ENCODE measurements at regions of chr14 and their contacts with region 1.

Region 1: DNA sequence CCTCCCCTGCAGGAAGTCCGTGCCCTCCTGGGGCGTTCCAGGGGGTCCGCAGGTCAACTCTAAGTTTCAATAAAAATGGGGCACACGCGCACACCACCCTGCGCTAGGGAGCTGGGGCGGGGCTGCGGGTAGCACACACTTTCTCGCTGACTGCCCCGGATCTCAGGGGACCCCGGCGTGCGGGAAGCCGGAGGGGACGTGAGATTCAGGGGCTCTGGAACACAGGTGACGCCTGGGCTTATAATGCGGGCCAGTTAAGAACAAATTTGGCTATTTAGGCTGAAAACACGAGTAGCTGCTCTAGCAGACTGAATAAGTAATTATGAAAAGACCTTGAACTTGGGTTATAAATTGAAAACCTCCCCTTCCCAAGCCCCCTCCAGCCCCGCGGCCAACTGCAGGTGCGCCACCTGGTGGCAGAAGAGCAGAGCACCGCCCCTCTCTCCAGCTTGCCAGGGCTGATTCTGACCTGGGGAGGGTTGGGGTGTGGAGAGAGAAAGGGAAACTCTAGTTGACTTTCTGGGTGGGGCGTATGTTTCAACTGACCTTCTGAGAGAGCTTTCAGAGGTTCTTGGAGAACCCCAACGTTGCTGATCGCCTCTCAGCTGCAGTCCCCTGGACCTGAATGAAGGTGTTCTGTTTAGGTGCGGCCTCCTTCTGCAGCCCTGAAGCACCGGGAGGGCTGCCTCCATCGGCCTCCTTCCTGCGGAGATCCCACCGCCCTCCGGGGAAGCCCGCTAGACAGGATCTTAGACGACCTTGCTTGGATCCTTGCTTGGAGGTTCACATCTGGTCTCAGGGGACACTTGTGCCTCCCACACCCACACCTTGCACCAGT is 118.4 kb upstream of the EVL start:
- DNase-seq: peak; percentile 68
- H3K4me3 Mint-ChIP-seq: peak overlapping the region; percentile 5
- H3K27ac Mint-ChIP-seq: no peak overlapping the region
- H3K4me1 Mint-ChIP-seq: peaks cover 19% of the 10 kb centered on the region
- H3K27me3 Mint-ChIP-seq: peaks cover 19% of the 10 kb centered on the region

Region 2: DNA sequence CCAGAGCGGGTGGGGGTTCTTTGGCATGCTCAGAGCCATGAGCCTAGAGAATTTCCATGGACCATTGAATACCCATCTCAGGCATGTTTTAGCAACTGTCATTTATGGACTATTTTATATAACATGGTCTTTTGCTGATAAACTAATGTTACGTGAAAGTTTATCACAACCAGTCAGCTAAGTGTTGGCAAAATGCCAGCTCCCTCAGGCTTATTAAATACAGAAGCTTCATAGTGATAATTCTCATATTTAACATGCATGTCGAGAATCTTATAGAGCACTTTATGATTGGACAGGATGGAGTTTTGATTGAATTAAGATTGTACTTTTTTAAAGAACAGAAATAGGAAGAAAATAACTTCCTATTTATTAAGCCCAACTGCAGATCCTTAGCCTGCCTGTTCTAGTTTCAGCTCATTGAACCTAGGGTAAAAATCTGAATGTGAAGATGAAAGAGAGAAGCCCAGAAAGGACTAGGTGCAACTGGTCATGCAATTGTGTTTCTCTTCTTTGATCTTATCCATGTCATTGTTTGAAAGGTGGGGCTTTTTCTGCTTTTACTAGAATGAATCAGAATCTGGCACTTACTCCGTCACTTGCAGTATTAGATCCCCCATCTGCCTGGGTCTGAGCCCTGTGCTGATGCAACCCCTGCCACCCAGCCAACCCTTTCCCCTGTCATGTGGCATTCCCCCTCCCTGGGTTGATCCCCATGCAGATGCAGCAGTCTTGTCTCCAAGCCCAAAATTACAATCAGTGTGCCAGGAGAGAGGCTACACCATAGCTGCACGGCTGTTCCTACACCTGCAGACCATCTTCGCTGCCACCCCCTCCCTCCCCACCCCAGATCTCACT is 16.2 kb before region 1 on chr14:
- CTCF ChIA-PET with region 1: interaction called, 5 read pairs
- POLR2A ChIA-PET with region 1: no interaction called
- intact Hi-C with region 1: loop called (anchors 2 kb)
- DNase-seq: peak; percentile 81
- H3K4me3 Mint-ChIP-seq: no peak overlapping the region
- H3K27ac Mint-ChIP-seq: peak overlapping the region; percentile 33
- H3K4me1 Mint-ChIP-seq: peaks cover 8% of the 10 kb centered on the region
- H3K27me3 Mint-ChIP-seq: peaks cover under 1% of the 10 kb centered on the region